ENCODE measurements at regions of chr12 and their contacts with region 1.

Region 1: DNA sequence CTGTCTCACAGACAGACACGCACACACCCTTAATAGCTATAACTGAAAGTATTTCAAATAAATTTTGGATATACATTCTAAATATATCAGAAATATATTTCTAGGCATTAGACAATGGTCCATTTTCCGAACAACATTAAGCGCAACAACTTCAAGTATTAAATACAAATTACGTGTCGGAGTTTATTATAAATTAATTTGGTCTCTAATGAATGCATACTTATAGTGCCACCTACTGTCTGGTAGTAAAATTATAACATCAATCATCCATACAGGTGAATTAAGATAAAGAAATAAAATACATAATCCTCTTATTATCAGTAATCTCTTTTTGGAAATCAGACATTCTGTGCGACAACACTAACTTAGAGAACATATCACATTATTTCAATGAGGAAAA is 27.2 kb upstream of the CMAS start:
- DNase-seq: no peak
- H3K4me3 ChIP-seq: no peak overlapping the region
- H3K27ac ChIP-seq: no peak overlapping the region
- H3K4me1 ChIP-seq: no peaks in the 10 kb centered on the region
- CTCF ChIP-seq: peak; percentile 83

Region 2: GRCh38 chr12:21248679-21249078 is 770.2 kb before region 1 on chr12:
- CTCF ChIA-PET with region 1: no interaction called
- POLR2A ChIA-PET with region 1: no interaction called
- intact Hi-C with region 1: loop called (anchors 10 kb)
- DNase-seq: peak; percentile 6
- H3K4me3 ChIP-seq: no peak overlapping the region
- H3K27ac ChIP-seq: no peak overlapping the region
- H3K4me1 ChIP-seq: no peaks in the 10 kb centered on the region
- CTCF ChIP-seq: peak; percentile 66

Region 3: GRCh38 chr12:21697904-21698630 is 320.8 kb before region 1 on chr12:
- CTCF ChIA-PET with region 1: no interaction called
- POLR2A ChIA-PET with region 1: no interaction called
- intact Hi-C with region 1: loop called (anchors 2 kb)
- DNase-seq: peak; percentile 30
- H3K4me3 ChIP-seq: no peak overlapping the region
- H3K27ac ChIP-seq: no peak overlapping the region
- H3K4me1 ChIP-seq: no peaks in the 10 kb centered on the region
- CTCF ChIP-seq: peak; percentile 91

Measured in OCI-LY7 (cell line).